Endothelial cell of umbilical vein (primary cell): ENCODE measurements at regions of chr19 and their contacts with region 1.

Region 1: DNA sequence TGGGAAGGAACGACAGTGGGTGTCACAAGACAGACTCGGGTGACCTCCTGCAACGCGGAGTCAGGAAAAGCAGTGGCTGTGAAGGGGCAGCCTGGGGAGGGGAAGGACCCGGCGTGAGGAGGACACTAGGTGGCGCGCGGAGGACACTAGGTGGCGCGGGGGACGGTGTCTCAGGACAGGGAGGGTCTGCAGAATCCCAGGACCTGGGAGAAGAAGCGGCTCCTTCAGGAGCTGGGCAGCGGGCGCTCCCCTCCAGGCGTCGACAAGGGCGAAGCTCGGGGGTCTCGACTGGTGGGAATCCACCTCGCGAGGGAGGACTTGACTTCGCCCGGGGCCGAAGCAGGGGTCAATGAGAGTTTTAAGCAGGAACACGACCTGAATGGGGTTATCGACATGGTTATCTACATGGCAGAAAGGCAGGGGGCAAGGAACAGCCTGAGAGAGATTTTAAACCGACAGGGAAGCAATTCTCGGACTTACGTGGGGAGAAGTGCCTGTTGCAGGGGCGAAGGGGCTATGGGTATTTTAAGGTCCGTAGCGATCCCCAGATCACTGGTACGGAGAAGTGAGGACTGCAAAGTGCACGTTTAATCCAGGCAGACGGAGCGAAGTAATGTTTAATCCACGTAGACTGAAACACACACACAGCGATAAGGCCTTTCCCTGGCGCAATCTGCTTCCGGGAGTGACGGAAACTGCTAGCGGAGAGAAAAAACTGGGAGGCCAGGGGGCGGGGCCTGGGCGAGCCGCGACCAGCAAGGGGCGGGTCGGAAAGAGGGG is at the start of gene ZNF616:
- DNase-seq: peak; percentile 95
- H3K4me3 ChIP-seq: peak within 1 kb of the TSS; percentile 55 to 88 (median 72)
- H3K27ac ChIP-seq: peak within 1 kb of the TSS; percentile 66
- H3K4me1 ChIP-seq: peaks cover 6% of the 10 kb centered on the region
- H3K27me3 ChIP-seq: no peaks in the 10 kb centered on the region
- CTCF ChIP-seq: peak; percentile 59 to 77
- POLR2A ChIP-seq: peak; percentile 78
- total RNA-seq, gene ZNF616: 8.7 and 9.1 TPM in 2 replicates

Region 2: GRCh38 chr19:52095172-52096014 is 44.0 kb before region 1 on chr19 and contains the start of gene ZNF841:
- CTCF ChIA-PET with region 1: no interaction called
- POLR2A ChIA-PET with region 1: no interaction called
- dilution Hi-C with region 1: no loop called
- intact Hi-C with region 1: loop called (anchors 1 kb)
- DNase-seq: peak; percentile 96
- H3K4me3 ChIP-seq: peak within 1 kb of the TSS; percentile 47 to 94 (median 70)
- H3K27ac ChIP-seq: peak within 1 kb of the TSS; percentile 62
- H3K4me1 ChIP-seq: peaks cover 2% of the 10 kb centered on the region
- H3K27me3 ChIP-seq: no peaks in the 10 kb centered on the region
- CTCF ChIP-seq: no peak
- POLR2A ChIP-seq: peak; percentile 63
- total RNA-seq, gene ZNF841: 17.7 and 18.6 TPM in 2 replicates

Region 3: DNA sequence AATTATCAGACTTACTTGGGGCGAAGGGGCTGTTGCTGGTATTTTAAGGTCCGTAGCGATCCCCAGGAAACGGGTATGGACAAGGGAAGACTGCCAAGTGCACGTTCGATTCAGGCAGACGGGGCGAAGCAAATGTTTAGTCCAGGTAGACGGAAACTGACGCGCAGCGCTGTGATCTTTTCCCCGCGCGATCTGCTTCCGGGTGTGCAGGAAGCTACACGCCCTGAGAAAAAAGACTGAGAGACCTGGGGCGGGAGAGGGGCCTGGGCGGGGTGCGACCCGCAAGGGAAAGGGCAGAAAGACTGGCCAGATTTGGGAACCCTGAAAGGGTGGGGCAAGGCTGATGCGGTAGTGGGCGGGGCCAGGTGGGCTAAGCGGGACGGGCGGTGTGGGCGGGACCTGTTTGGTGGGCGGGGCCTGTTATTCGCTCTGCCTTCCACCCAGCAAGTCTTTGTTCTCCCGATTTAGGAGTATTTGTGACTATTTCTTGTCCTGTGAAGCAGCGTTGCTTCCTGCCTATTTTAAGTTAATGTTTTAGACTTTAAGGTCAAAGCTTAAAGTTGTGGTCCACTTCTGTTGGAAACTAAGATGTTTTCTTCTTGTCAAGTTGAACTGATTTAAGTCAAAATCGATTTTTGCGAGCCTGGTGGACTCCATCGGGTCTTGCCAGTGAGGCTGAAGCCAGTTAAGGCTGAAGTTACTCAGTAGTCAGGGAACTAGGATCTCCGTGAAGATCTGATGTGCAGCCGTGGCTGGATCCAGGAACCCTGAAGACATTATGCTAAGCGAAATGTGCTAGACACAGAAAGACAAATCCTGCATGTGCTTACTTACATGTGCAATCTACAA is 32.1 kb after region 1 on chr19 and contains the start of gene ZNF836:
- CTCF ChIA-PET with region 1: interaction called, 3 read pairs
- POLR2A ChIA-PET with region 1: no interaction called
- dilution Hi-C with region 1: no loop called
- intact Hi-C with region 1: loop called (anchors 1 kb)
- DNase-seq: peak; percentile 81
- H3K4me3 ChIP-seq: peak within 1 kb of the TSS; percentile 88 to 95 (median 93)
- H3K27ac ChIP-seq: peak within 1 kb of the TSS; percentile 22
- H3K4me1 ChIP-seq: peaks cover 4% of the 10 kb centered on the region
- H3K27me3 ChIP-seq: no peaks in the 10 kb centered on the region
- CTCF ChIP-seq: no peak
- POLR2A ChIP-seq: peak; percentile 55
- total RNA-seq, gene ZNF836: 7.2 and 9.3 TPM in 2 replicates